Head of caudate nucleus (tissue), 42 donors: ENCODE measurements at regions of chr5 and their contacts with region 1.

Region 1: DNA sequence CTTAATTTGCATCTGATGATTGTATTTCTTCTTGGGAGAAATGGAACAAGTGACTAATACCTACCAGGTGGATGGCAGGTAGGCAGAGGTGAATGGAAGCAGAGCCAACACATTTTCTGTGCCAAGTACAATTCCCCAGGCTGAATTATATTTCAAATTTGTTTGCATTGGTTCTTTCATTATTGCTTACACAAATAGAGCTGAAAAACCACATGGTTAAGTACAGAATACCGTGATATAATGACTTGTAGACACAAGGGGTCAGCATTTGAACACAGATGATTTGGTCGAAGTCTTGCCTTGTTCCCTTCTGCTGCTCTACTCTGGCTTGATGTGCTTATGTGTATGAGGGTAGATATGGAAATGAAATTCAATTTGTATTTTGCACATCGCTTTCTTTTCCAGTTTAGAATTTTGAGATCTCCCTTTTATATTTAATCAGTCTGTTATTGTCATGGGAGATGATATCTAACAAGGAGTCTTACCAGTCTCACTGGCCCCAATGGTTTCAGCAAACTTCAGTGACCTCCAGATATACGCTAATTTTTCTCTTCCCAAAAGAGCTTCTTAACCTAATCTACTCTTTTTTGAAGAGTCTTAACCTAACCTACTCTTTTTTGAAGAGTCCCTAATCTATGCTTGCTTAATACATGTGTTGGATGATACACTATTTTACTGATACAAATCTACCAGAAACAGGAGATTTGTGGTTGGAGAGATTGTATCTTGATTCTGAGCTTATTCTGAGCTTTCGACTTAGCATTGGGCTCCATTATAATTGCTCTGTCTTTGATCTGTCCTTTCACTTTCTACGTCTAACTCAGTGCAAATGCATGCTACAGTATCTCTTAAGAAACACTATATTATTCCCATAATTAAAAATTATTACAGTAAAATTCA is 88.1 kb downstream of the PCSK1 start:
- DNase-seq: peak in 13 of 42 donors; percentile 19 to 74 (median 49)

Region 2: DNA sequence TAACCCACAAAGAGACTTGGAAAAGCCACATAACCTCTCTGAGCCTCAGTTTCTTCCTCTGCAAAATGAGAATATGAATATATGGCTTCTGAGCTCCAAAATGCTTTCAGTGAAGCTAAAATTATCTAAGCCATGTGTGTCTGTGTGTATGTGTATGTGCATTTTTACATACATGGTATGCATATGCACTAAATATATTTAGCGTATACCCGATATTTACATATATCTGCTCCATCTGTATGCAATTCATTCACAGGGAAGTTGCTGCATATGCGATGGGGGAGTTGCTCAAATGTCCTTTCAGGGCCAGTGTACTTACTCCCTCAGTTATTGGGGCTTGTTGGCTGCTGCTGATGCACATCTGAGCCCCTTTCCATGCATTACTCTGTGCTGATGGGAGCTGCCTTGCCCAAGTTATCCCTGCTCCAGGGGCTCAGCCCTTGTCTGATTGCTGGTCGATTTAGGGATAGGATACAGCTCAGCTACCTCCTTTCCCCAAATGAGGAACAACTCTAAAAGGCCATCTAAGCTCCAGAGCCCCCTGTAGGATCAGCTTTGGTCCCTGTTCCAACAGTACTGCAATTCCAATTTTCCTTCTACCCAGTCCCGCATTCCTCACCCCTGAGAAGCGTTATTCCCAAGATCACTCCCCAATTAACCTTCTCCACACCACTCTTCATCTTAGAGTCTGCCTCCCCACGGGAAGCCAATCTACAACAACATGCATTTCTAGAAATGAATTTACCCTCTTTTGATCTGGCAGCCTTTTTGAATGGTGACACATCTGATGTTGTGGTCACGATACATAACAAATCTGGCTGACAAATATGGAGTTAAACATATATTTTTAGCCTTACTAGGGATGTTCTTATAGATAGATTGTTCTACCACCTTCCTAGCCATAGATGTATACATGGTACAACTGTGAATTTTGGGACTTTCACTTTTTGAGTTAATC is 597.9 kb before region 1 on chr5:
- intact Hi-C with region 1: no loop called
- DNase-seq: no peak

Region 3: DNA sequence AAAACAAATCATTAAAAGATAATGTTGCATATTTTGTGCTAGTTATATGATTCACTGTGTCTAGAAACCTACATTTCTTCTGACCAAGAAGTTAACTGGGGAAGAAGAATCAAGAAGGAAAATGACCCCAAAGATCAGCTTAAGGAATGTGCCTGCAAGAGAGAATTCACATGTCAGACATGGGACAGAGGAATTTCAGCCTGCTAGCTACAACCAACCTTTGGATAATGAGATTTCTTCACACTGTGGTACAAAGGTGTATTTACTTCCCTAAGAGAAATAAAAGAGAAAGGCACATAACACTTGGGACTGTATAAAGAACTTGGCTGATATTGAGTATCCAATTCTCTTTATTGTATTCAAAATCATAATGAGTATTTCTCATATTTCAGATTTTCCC is 343.7 kb before region 1 on chr5:
- intact Hi-C with region 1: no loop called
- DNase-seq: no peak

Region 4: GRCh38 chr5:96595300-96596090 is 250.6 kb after region 1 on chr5:
- intact Hi-C with region 1: loop called (anchors 5 kb)
- DNase-seq: no peak